ENCODE measurements at regions of chr6 and their contacts with region 1.

Region 1: GRCh38 chr6:147202516-147203312 is 1.5 kb upstream of the STXBP5 start:
- DNase-seq: peak; percentile 69
- H3K4me3 Mint-ChIP-seq: peak overlapping the region; percentile 97
- H3K27ac Mint-ChIP-seq: peak overlapping the region; percentile 87
- H3K4me1 Mint-ChIP-seq: peaks cover 8% of the 10 kb centered on the region
- H3K27me3 Mint-ChIP-seq: no peaks in the 10 kb centered on the region
- CTCF ChIP-seq: no peak

Region 2: GRCh38 chr6:147063469-147064031 is 139.2 kb before region 1 on chr6:
- CTCF ChIA-PET with region 1: no interaction called
- intact Hi-C with region 1: loop called (anchors 10 kb)
- DNase-seq: peak; percentile 1
- H3K4me3 Mint-ChIP-seq: no peak overlapping the region
- H3K27ac Mint-ChIP-seq: no peak overlapping the region
- H3K4me1 Mint-ChIP-seq: peaks cover 38% of the 10 kb centered on the region
- H3K27me3 Mint-ChIP-seq: no peaks in the 10 kb centered on the region
- CTCF ChIP-seq: no peak

Region 3: DNA sequence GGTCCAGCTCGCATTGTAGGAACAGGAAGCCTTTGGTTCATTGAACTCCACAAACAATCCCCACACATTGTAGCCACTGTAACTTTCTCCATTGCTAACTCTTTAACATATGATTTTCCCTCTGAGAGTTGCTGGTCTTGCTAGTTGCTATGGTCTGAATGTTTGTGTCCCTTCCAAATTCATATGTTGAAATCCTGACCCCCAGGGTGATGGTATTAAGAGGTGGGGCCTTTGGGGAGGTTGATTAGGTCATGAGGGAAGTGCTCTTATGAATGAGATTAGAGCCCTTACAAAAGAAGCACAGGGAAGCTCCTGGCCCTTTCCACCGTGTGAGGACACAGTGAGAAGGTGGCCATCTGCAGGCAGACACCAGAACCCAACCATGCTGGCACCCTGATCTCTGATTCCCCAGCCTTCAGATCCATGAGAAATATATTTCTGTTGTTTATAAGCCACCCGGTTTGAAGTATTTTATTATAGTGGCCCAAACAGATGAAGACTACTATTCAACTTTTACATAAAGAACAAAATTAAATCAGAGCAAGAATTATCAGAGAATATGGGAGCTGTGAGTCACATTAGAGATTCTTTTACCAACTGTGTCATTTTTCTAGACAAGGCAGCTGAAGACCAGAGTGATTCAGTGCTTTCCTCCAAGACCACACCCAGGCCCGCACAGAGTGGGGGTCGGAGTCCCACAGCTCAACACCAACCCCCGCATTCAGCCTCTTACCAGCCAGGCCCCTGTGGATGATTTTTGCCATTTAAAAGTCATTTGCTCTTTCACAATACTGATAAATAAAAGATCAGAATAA is 448.7 kb after region 1 on chr6:
- CTCF ChIA-PET with region 1: no interaction called
- intact Hi-C with region 1: no loop called
- DNase-seq: no peak
- H3K4me3 Mint-ChIP-seq: no peak overlapping the region
- H3K27ac Mint-ChIP-seq: no peak overlapping the region
- H3K4me1 Mint-ChIP-seq: no peaks in the 10 kb centered on the region
- H3K27me3 Mint-ChIP-seq: no peaks in the 10 kb centered on the region
- CTCF ChIP-seq: no peak